Gastrocnemius medialis (tissue), 4 donors: ENCODE measurements at regions of chr6 and their contacts with region 1.

Region 1: GRCh38 chr6:150395398-150396009 is 26.7 kb downstream of the IYD start:
- DNase-seq: peak; percentile 13 to 17
- ATAC-seq: peak; percentile 62 to 86
- H3K4me3 ChIP-seq: no peak overlapping the region
- H3K27ac ChIP-seq: no peak overlapping the region
- H3K4me1 ChIP-seq: no peaks in the 10 kb centered on the region
- H3K27me3 ChIP-seq: no peaks in the 10 kb centered on the region
- CTCF ChIP-seq: peak; percentile 38 to 70 (median 69)
- POLR2A ChIP-seq: no peak

Region 2: DNA sequence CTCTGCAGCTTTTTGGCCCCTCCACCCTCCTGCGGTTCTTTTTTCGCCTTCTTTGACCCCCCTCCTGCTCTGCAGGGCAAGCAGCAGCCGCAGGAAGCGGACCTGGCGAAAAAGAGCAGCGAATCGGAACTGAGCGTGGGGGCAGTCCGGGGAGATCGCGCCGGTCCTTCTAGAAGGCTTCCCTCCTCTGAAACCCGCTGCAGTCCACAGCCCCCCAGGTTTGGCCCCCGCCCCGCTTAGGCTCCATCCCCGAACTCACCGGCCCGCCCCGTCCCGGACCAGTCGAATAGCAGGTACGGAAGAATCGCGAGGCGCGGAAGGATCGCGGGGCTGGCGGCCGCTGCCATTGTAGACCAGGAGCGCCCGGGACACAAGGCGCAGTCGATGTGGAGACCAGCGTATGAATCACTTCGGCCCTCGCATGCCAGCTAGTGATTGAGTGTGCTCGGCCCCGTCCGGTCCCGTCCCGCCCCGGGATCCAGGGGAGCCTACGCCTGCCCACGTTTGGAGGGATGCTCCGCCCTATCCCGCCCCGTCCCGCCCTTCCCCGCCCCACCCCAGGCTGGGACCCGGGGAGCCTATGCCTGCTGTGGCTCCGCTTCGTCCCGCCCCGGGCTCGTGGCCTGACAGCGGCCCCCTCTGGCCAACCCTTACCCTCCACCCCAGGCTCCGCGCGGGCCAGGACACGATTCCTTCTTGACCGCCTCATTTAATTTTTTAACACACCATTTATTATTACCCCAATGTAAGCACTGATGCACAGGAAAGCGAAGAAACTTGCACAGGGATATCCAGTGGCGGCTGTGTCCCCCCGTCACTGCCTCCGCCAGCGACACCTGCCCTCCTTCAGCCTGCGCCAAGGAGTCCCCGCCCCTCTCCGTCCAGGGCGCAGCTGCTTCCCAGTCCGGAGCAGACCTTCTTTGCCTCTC is 326.5 kb before region 1 on chr6 and contains the start of gene ULBP3:
- in situ Hi-C with region 1: loop called in 1 of 4 experiments (anchors 10 kb)
- intact Hi-C with region 1: no loop called
- DNase-seq: peak; percentile 69 to 83
- ATAC-seq: peak; percentile 77 to 83
- H3K4me3 ChIP-seq: peak within 1 kb of the TSS; percentile 67 to 91 (median 71)
- H3K27ac ChIP-seq: peak within 1 kb of the TSS; percentile 50 to 68 (median 57)
- H3K4me1 ChIP-seq: peaks cover 3 to 4% of the 10 kb centered on the region in 2 donors
- H3K27me3 ChIP-seq: no peaks in the 10 kb centered on the region
- CTCF ChIP-seq: peak in 4 of 5 experiments; percentile 27 to 67 (median 50)
- POLR2A ChIP-seq: peak; percentile 42 to 71
- total RNA-seq, gene ULBP3: 1.1 TPM in 1 of 4 donors, not detected in the others

Region 3: DNA sequence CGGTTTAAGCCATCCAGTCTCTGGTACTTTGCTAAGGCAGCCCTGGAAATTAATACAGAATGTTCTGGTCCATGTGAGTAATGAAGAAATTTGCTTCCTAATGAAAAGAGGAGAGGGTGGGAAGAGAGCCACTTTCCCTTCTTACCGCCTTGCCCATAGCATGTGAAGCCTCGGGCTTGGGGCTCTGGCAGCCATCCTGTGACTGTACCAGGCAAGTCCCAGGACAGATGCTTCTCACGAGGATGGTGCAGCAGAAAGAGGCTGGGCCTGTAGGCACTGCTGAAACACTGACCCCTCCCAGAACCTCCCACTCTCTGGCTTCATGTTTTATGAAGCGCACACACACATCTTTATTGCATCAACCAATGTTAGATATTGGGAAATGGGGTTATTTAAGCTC is 48.1 kb after region 1 on chr6:
- in situ Hi-C with region 1: no loop called
- intact Hi-C with region 1: no loop called
- DNase-seq: no peak
- ATAC-seq: no peak
- H3K4me3 ChIP-seq: no peak overlapping the region
- H3K27ac ChIP-seq: no peak overlapping the region
- H3K4me1 ChIP-seq: no peaks in the 10 kb centered on the region
- H3K27me3 ChIP-seq: no peaks in the 10 kb centered on the region
- CTCF ChIP-seq: no peak
- POLR2A ChIP-seq: no peak